ENCODE measurements at regions of chr1 and their contacts with region 1.

Region 1: DNA sequence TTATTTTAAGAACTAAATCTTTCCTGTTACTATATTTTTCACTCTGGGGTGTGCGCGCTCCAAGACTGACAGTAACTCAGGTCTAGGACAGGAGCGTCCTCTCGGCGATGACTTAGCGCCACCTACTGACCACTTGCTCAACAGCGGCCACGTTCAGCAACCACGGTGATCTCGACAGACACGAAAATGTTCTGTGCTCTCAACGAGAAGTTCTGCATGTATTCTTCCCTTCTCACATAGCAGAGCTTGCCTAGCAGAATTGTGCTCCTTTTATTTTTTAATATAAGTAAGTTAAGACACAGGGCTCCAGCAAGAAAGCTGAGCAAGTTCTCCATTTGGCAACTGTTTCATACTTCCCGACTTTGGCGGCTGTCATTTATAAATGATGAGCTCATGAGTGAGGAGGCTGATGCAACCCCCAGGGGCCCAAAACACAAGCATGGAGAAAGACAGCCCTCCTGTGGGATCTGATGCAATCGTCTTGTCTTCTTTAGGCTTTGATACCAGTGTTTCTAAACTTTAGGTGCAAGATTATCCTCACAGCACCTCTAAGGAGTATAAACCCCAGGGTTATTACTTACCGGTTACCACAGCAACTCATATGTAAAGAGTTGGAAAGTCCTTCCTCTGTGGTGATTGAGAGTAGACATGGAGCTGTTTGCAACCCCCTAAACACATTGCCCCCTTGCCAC is 92.6 kb downstream of the HHIPL2 start:
- DNase-seq: peak; percentile 85 to 97 (median 93)

Region 2: DNA sequence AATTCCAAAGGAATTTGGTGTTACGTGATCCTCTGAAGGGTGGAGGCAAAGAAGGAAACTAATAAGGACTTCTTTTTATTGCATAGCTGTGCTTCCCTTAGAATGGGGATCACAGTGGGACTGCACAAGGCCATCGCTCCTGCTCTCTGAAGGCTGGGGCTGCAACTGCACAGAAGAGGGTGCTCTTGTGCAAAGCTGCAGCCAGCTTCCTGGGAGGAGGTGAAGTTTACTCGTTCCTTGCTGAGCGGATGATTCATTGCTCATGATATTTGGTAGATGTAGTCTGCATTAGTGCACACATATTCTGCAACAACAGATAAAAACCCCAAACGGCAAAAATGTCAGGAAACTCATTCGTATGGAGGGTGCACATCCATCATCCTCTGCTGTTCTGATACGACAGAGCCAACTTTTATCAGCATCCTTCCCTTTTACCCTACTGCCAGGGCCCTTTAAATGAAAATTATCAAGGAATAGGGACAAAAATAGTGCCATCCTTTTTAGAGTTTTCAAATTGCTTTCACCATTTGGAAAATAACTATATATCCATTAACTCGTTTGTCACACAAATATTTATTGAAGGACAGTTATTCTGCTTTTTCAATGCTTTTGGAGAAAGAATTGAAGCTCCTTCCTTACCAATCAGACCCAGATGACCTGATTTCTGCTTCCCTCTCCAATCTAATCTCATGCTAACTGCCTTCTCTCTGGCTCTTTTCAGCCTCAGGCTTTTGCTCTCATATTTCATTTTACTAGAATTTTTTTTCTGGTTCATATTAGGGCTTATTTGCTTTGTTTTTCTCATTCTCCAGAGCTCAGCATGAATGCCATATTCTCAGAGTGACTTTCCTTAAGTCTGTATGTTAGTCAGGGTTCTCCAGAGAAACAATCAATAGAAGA is 977.0 kb before region 1 on chr1:
- intact Hi-C with region 1: loop called (anchors 10 kb)
- DNase-seq: peak; percentile 47 to 91 (median 78)

Region 3: GRCh38 chr1:222521299-222522104 is 66.2 kb after region 1 on chr1:
- intact Hi-C with region 1: no loop called
- DNase-seq: no peak

Region 4: GRCh38 chr1:222665964-222666363 is 210.6 kb after region 1 on chr1:
- intact Hi-C with region 1: no loop called
- DNase-seq: no peak

Region 5: GRCh38 chr1:223001653-223002634 is 546.6 kb after region 1 on chr1:
- intact Hi-C with region 1: no loop called
- DNase-seq: no peak

Measured in head of caudate nucleus (tissue), 42 donors.